CD4-positive, alpha-beta memory T cell (primary cell): ENCODE measurements at regions of chr6 and their contacts with region 1.

Region 1: GRCh38 chr6:2988426-2989331 is 11.0 kb upstream of the NQO2 start:
- DNase-seq: peak; percentile 76 to 78 (median 77)
- H3K4me3 ChIP-seq: peak overlapping the region; percentile 52 to 66
- H3K4me3 Mint-ChIP-seq: peak overlapping the region; percentile 92 to 98 (median 98)
- H3K27ac ChIP-seq: peak overlapping the region; percentile 92
- H3K27ac Mint-ChIP-seq: peak overlapping the region; percentile 99 to 100 (median 100)
- H3K4me1 ChIP-seq: peaks cover 26% of the 10 kb centered on the region
- H3K4me1 Mint-ChIP-seq: peaks cover 19 to 37% (median 27%) of the 10 kb centered on the region in 4 donors
- H3K27me3 ChIP-seq: no peaks in the 10 kb centered on the region
- H3K27me3 Mint-ChIP-seq: no peaks in the 10 kb centered on the region

Region 2: GRCh38 chr6:2765166-2765895 is 223.3 kb before region 1 on chr6 and contains the start of gene WRNIP1:
- CTCF ChIA-PET with region 1: interaction called, 8 read pairs
- POLR2A ChIA-PET with region 1: interaction called, 32 read pairs
- intact Hi-C with region 1: loop called (anchors 1 kb)
- DNase-seq: peak; percentile 95 to 98 (median 98)
- H3K4me3 ChIP-seq: peak within 1 kb of the TSS; percentile 63 to 79
- H3K4me3 Mint-ChIP-seq: peak within 1 kb of the TSS; percentile 93 to 97 (median 95)
- H3K27ac ChIP-seq: peak within 1 kb of the TSS; percentile 90
- H3K27ac Mint-ChIP-seq: peak within 1 kb of the TSS; percentile 98 to 100 (median 99)
- H3K4me1 ChIP-seq: peaks cover 45% of the 10 kb centered on the region
- H3K4me1 Mint-ChIP-seq: peaks cover 33 to 63% (median 43%) of the 10 kb centered on the region in 4 donors
- H3K27me3 ChIP-seq: no peaks in the 10 kb centered on the region
- H3K27me3 Mint-ChIP-seq: peaks cover 0 to 1% of the 10 kb centered on the region in 2 donors
- total RNA-seq, gene WRNIP1: 41.1 to 42.7 TPM

Region 3: DNA sequence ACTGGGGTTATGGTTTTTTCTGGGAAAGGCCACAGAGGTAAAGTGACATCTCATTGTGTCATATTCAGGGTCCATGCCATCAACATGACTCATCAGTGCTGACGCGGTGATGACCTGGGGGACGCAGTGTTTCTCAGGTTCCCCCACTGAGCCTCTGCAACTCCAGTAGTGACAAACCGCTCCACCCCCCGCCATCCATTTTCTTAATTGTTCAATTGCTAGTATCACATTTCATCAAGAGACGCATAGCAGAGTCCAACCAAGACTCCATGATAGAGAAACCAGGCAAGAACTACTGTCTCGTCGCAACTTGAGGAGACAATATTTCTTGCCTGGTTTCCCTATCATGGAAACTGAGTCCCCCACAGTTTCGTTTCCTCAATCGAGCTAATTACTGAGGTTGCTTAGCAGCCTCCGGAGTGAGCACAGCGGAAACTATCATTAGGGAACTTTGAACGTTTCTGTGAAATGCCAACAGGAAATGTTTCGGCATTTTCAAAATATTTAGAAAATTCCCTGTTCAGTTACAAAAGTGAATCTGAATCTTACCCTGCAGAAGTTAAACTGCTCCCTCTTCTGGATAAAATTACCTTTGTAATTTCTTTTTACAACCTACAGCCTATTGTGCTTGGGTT is 134.8 kb before region 1 on chr6:
- CTCF ChIA-PET with region 1: interaction called, 59 read pairs
- POLR2A ChIA-PET with region 1: interaction called, 30 read pairs
- intact Hi-C with region 1: no loop called
- DNase-seq: peak; percentile 35 to 94 (median 40)
- H3K4me3 ChIP-seq: peak overlapping the region; percentile 39 to 42
- H3K4me3 Mint-ChIP-seq: peak overlapping the region; percentile 71 to 95 (median 81)
- H3K27ac ChIP-seq: peak overlapping the region; percentile 92
- H3K27ac Mint-ChIP-seq: peak overlapping the region; percentile 87 to 100 (median 95)
- H3K4me1 ChIP-seq: peaks cover 70% of the 10 kb centered on the region
- H3K4me1 Mint-ChIP-seq: peaks cover 48 to 75% (median 62%) of the 10 kb centered on the region in 4 donors
- H3K27me3 ChIP-seq: no peaks in the 10 kb centered on the region
- H3K27me3 Mint-ChIP-seq: no peaks in the 10 kb centered on the region

Region 4: GRCh38 chr6:2940010-2940850 is 48.4 kb before region 1 on chr6:
- CTCF ChIA-PET with region 1: interaction called, 108 read pairs
- POLR2A ChIA-PET with region 1: interaction called, 248 read pairs
- intact Hi-C with region 1: loop called (anchors 1 kb)
- DNase-seq: peak; percentile 76 to 93 (median 80)
- H3K4me3 ChIP-seq: peak overlapping the region; percentile 58 to 59
- H3K4me3 Mint-ChIP-seq: peak overlapping the region; percentile 79 to 95 (median 90)
- H3K27ac ChIP-seq: peak overlapping the region; percentile 61
- H3K27ac Mint-ChIP-seq: peak overlapping the region; percentile 89 to 99 (median 96)
- H3K4me1 ChIP-seq: peaks cover 81% of the 10 kb centered on the region
- H3K4me1 Mint-ChIP-seq: peaks cover 49 to 73% (median 60%) of the 10 kb centered on the region in 4 donors
- H3K27me3 ChIP-seq: no peaks in the 10 kb centered on the region
- H3K27me3 Mint-ChIP-seq: no peaks in the 10 kb centered on the region

Region 5: GRCh38 chr6:2999618-3000557 is 11.2 kb after region 1 on chr6 and contains the start of gene NQO2:
- CTCF ChIA-PET with region 1: interaction called, 17 read pairs
- POLR2A ChIA-PET with region 1: interaction called, 90 read pairs
- intact Hi-C with region 1: loop called (anchors 1 kb)
- DNase-seq: peak; percentile 79 to 88 (median 85)
- H3K4me3 ChIP-seq: peak within 1 kb of the TSS; percentile 81 to 92
- H3K4me3 Mint-ChIP-seq: peak within 1 kb of the TSS; percentile 87 to 95 (median 91)
- H3K27ac ChIP-seq: peak within 1 kb of the TSS; percentile 80
- H3K27ac Mint-ChIP-seq: peak within 1 kb of the TSS; percentile 85 to 96 (median 91)
- H3K4me1 ChIP-seq: peaks cover 23% of the 10 kb centered on the region
- H3K4me1 Mint-ChIP-seq: peaks cover 17 to 38% (median 27%) of the 10 kb centered on the region in 4 donors
- H3K27me3 ChIP-seq: no peaks in the 10 kb centered on the region
- H3K27me3 Mint-ChIP-seq: no peaks in the 10 kb centered on the region
- total RNA-seq, gene NQO2: 34.2 to 36.6 TPM

Region 6: DNA sequence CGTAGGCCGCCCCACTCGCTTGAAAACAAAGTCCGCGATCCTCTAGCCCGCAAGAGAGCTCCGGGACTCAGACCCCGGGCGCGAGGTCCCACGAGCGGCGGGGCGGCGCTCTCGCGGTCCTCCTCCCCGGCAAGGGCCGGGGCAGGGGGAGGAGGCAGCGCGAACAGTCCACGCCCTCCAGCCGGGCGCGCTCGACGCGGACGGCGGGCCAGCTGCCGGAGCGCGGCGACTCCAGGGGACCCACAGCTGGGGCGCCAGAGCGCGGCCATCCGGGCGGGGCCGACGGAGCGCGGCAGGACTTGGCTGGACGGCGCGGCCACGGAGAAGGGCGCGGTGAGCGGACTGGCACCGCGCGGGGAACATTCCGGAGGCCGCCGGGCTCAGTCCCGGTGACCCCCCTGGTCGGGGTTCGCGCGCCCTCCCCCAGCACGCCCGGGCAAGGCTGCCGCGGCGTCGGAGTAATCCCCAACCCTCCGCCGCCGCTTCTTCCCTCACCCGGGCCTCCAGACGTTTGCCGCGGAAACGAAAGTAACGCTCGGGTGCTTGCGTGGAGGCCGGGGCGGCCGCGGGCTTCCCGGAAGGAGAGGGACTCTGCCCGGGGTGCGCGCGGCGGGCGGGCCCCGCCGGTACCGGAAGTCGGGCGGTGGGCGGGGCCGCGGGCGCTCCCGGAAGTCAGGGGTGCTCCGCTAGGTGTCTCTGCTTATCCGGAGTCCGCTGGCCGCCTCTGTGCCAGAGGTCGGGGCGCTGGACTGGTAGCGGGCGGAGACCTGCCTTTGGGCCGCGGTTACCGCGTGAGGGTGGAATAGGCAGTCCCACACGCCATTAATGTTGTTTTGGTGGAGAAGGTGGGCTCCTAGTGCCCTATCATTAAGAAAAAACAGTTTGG is 79.9 kb after region 1 on chr6 and contains the start of gene RIPK1:
- CTCF ChIA-PET with region 1: interaction called, 16 read pairs
- POLR2A ChIA-PET with region 1: interaction called, 107 read pairs
- intact Hi-C with region 1: no loop called
- DNase-seq: peak; percentile 93 to 96 (median 94)
- H3K4me3 ChIP-seq: peak within 1 kb of the TSS; percentile 64 to 88
- H3K4me3 Mint-ChIP-seq: peak within 1 kb of the TSS; percentile 94 to 99 (median 96)
- H3K27ac ChIP-seq: peak within 1 kb of the TSS; percentile 98
- H3K27ac Mint-ChIP-seq: peak within 1 kb of the TSS; percentile 96 to 99 (median 98)
- H3K4me1 ChIP-seq: peaks cover 61% of the 10 kb centered on the region
- H3K4me1 Mint-ChIP-seq: peaks cover 40 to 85% (median 57%) of the 10 kb centered on the region in 4 donors
- H3K27me3 ChIP-seq: no peaks in the 10 kb centered on the region
- H3K27me3 Mint-ChIP-seq: no peaks in the 10 kb centered on the region
- total RNA-seq, gene RIPK1: 38.7 to 39.0 TPM

Region 7: GRCh38 chr6:3088446-3088845 is 99.8 kb after region 1 on chr6:
- CTCF ChIA-PET with region 1: no interaction called
- POLR2A ChIA-PET with region 1: no interaction called
- intact Hi-C with region 1: no loop called
- DNase-seq: no peak
- H3K4me3 ChIP-seq: no peak overlapping the region
- H3K4me3 Mint-ChIP-seq: no peak overlapping the region
- H3K27ac ChIP-seq: no peak overlapping the region
- H3K27ac Mint-ChIP-seq: peak overlapping the region in 6 of 7 donors; percentile 18 to 73 (median 56)
- H3K4me1 ChIP-seq: no peaks in the 10 kb centered on the region
- H3K4me1 Mint-ChIP-seq: peaks cover 4 to 14% (median 13%) of the 10 kb centered on the region in 4 donors
- H3K27me3 ChIP-seq: no peaks in the 10 kb centered on the region
- H3K27me3 Mint-ChIP-seq: no peaks in the 10 kb centered on the region

Region 8: GRCh38 chr6:3848925-3849605 is 860.4 kb after region 1 on chr6 and contains the start of gene FAM50B:
- CTCF ChIA-PET with region 1: interaction called, 3 read pairs
- POLR2A ChIA-PET with region 1: interaction called, 5 read pairs
- intact Hi-C with region 1: loop called (anchors 5 kb)
- DNase-seq: peak; percentile 90 to 92 (median 91)
- H3K4me3 ChIP-seq: peak within 1 kb of the TSS in 1 of 2 donors; percentile 63
- H3K4me3 Mint-ChIP-seq: peak within 1 kb of the TSS; percentile 79 to 87 (median 85)
- H3K27ac ChIP-seq: peak within 1 kb of the TSS; percentile 45
- H3K27ac Mint-ChIP-seq: peak within 1 kb of the TSS; percentile 66 to 96 (median 92)
- H3K4me1 ChIP-seq: peaks cover 34% of the 10 kb centered on the region
- H3K4me1 Mint-ChIP-seq: peaks cover 21 to 46% (median 29%) of the 10 kb centered on the region in 4 donors
- H3K27me3 ChIP-seq: no peaks in the 10 kb centered on the region
- H3K27me3 Mint-ChIP-seq: no peaks in the 10 kb centered on the region
- total RNA-seq, gene FAM50B: 15.0 to 15.4 TPM